ENCODE measurements at regions of chr2 and their contacts with region 1.

Region 1: DNA sequence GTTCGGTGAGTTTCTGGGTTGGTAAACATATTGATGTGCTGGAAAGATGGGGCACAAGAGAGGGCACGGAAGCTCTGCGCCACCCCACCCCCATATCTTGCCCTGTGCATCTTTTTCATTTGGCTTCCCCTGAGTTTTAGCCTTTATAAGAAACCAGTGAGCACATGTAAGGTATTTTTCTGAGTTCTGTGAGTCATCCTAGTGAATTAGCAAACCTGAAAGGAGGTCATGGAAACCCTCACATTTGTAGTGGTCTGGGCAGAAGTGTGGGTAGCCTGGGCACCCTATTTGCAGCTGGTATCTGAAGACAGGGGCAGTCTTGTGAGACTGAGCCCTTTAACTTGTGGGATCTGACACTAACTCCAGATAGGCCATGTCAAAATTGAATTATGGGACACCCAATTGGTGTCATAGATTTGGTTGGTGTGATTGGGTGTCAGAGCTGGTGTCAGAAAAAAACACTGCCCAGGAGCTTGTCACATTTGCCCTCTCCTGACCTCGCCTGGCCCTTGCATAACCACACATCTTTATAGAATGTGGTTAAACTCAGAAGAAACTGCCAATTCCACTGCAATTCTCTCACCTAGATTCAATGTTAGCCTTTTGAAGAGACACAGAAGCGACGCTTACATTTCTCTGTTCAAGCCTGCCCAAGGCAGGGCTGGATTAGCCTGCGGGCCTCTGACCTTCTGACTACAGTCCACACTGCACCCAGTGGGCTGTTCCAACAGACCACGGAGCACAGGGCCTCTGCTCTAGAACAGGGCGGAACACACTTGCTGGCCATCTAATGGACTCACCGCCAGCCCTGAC is 12.0 kb upstream of the GALM start:
- DNase-seq: peak; percentile 49
- H3K4me3 Mint-ChIP-seq: peak overlapping the region; percentile 52
- H3K27ac Mint-ChIP-seq: peak overlapping the region; percentile 85
- H3K4me1 Mint-ChIP-seq: peaks cover 64% of the 10 kb centered on the region
- H3K27me3 Mint-ChIP-seq: no peaks in the 10 kb centered on the region

Region 2: GRCh38 chr2:38602732-38603401 is 51.1 kb before region 1 on chr2 and contains the start of gene HNRNPLL:
- intact Hi-C with region 1: loop called (anchors 1 kb)
- DNase-seq: peak; percentile 95
- H3K4me3 Mint-ChIP-seq: peak within 1 kb of the TSS; percentile 90
- H3K27ac Mint-ChIP-seq: peak within 1 kb of the TSS; percentile 91
- H3K4me1 Mint-ChIP-seq: peaks cover 59% of the 10 kb centered on the region
- H3K27me3 Mint-ChIP-seq: no peaks in the 10 kb centered on the region
- total RNA-seq, gene HNRNPLL: 65.7 and 67.7 TPM in 2 replicates

Region 3: DNA sequence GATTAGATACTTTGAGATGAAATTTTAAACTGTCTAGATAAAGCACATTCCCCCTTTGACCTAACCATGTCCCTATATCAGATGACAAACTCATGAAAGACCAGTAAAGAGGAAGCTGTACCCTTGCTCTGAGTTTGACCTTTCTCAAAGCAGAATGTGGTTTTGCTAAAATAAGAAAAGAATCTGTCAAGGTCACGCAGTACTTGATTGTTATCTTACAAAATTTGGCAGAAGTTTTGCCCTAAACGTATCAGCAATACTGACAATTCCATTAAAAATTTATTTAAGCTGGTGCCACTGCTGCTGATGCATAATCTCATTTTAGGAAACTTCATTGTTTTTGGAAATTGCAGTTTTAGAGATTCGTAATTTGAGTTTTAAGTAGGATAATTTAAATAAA is 19.2 kb before region 1 on chr2:
- intact Hi-C with region 1: loop called (anchors 1 kb)
- DNase-seq: no peak
- H3K4me3 Mint-ChIP-seq: peak overlapping the region; percentile 8
- H3K27ac Mint-ChIP-seq: peak overlapping the region; percentile 21
- H3K4me1 Mint-ChIP-seq: peaks cover 50% of the 10 kb centered on the region
- H3K27me3 Mint-ChIP-seq: no peaks in the 10 kb centered on the region

Region 4: GRCh38 chr2:38665854-38666555 is 12.1 kb after region 1 on chr2 and contains the start of gene GALM:
- intact Hi-C with region 1: loop called (anchors 1 kb)
- DNase-seq: peak; percentile 51
- H3K4me3 Mint-ChIP-seq: peak within 1 kb of the TSS; percentile 88
- H3K27ac Mint-ChIP-seq: peak within 1 kb of the TSS; percentile 96
- H3K4me1 Mint-ChIP-seq: peaks cover 64% of the 10 kb centered on the region
- H3K27me3 Mint-ChIP-seq: no peaks in the 10 kb centered on the region
- total RNA-seq, gene GALM: 42.1 and 43.0 TPM in 2 replicates

Region 5: GRCh38 chr2:38700113-38700785 is 46.3 kb after region 1 on chr2:
- intact Hi-C with region 1: loop called (anchors 1 kb)
- DNase-seq: no peak
- H3K4me3 Mint-ChIP-seq: peak overlapping the region; percentile 65
- H3K27ac Mint-ChIP-seq: peak overlapping the region; percentile 84
- H3K4me1 Mint-ChIP-seq: peaks cover 43% of the 10 kb centered on the region
- H3K27me3 Mint-ChIP-seq: no peaks in the 10 kb centered on the region

Region 6: GRCh38 chr2:38750891-38751595 is 97.1 kb after region 1 on chr2 and contains the start of gene SRSF7:
- intact Hi-C with region 1: loop called (anchors 1 kb)
- DNase-seq: peak; percentile 97
- H3K4me3 Mint-ChIP-seq: peak within 1 kb of the TSS; percentile 98
- H3K27ac Mint-ChIP-seq: peak within 1 kb of the TSS; percentile 100
- H3K4me1 Mint-ChIP-seq: peaks cover 53% of the 10 kb centered on the region
- H3K27me3 Mint-ChIP-seq: no peaks in the 10 kb centered on the region
- total RNA-seq, gene SRSF7: 401 and 406 TPM in 2 replicates

Measured in activated T-helper 2 cell treated with anti-CD3 and anti-CD28 coated beads, Interferon-gamma antibody, Interleukin-2, Interleukin-4, amounts not matched to agents 10 μg/mL and 5 μg/mL and 100 μg/mL, durations not matched to agents 14 hours and 24 hours and 36 hours (primary cell).